ENCODE measurements at regions of chr11 and their contacts with region 1.

Region 1: GRCh38 chr11:62652161-62653006 is 718 bp downstream of the INTS5 start:
- DNase-seq: no peak
- ATAC-seq: no peak
- H3K4me3 Mint-ChIP-seq: peak overlapping the region; percentile 90
- H3K27ac Mint-ChIP-seq: peak overlapping the region; percentile 90
- H3K4me1 Mint-ChIP-seq: peaks cover 28% of the 10 kb centered on the region
- H3K27me3 Mint-ChIP-seq: no peaks in the 10 kb centered on the region
- CTCF ChIP-seq: no peak

Region 2: DNA sequence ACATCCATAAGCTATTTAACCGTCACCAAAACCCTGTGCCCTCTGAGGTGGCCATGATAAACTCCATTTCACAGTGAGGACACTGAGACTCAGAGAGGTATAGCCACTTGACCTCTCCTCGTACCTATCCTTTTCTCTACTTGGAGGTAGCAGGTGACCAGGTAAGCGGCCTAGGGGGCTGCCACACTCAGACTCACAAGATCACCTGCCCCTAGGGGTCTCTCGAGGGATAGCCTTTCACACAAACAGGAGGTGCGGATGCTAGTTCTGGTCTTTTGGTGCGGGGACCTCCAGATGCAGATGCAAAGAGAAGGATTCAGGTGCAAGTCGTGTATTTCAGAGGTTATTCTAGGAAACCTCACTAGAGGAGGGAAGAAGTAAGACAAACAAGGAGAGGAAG is 1913.3 kb before region 1 on chr11:
- CTCF ChIA-PET with region 1: no interaction called
- POLR2A ChIA-PET with region 1: no interaction called
- intact Hi-C with region 1: no loop called
- DNase-seq: no peak
- ATAC-seq: no peak
- H3K4me3 Mint-ChIP-seq: no peak overlapping the region
- H3K27ac Mint-ChIP-seq: no peak overlapping the region
- H3K4me1 Mint-ChIP-seq: no peaks in the 10 kb centered on the region
- H3K27me3 Mint-ChIP-seq: peaks cover 14% of the 10 kb centered on the region
- CTCF ChIP-seq: no peak

Region 3: DNA sequence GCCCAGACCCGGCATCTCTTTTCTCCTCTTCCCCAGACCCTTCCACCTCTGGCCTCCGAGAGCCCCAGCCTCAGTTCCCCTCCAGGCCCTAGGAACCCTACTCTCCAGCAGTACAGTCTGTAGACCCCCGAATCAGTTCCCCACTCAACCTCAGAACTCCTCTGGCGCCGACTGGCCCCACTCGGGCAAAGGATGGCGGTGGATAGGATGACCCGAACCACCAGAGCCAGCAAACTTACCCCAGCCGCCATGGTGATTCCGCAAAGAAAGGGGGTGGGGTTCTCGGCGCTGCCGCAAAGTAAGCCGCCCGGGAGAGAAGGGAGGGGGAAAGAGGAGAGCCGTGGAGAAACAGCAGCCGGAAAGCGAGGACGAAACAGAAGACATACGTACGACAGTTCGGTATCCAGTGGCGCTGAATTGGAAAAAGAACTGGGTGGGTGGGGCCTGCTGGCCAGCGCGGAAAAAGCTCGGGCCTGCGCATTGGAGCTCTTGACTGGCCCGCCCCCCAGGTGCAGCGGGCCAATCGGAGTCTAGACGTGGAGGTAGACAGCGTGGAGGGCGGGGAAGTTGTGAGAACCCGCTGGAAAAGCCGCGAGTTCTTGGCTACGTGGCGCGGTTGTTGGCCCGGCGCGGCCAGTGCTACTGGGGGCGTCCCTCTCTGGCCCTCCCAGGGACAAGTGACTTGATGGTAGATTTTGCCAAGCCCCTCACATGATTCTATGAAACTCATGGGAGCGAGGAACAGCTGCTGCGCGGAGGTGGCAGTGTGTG is 78.6 kb before region 1 on chr11 and contains the start of gene EEF1G:
- CTCF ChIA-PET with region 1: no interaction called
- POLR2A ChIA-PET with region 1: interaction called, 10 read pairs
- intact Hi-C with region 1: no loop called
- DNase-seq: peak; percentile 92
- ATAC-seq: peak; percentile 94
- H3K4me3 Mint-ChIP-seq: peak within 1 kb of the TSS; percentile 97
- H3K27ac Mint-ChIP-seq: peak within 1 kb of the TSS; percentile 94
- H3K4me1 Mint-ChIP-seq: peaks cover 51% of the 10 kb centered on the region
- H3K27me3 Mint-ChIP-seq: no peaks in the 10 kb centered on the region
- CTCF ChIP-seq: no peak
- total RNA-seq, gene EEF1G: 2,373 and 2,524 TPM in 2 replicates

Region 4: GRCh38 chr11:62601394-62602140 is 50.8 kb before region 1 on chr11 and contains the start of gene MTA2:
- CTCF ChIA-PET with region 1: no interaction called
- POLR2A ChIA-PET with region 1: interaction called, 15 read pairs
- intact Hi-C with region 1: no loop called
- DNase-seq: peak; percentile 100
- ATAC-seq: peak; percentile 81
- H3K4me3 Mint-ChIP-seq: peak within 1 kb of the TSS; percentile 92
- H3K27ac Mint-ChIP-seq: peak within 1 kb of the TSS; percentile 97
- H3K4me1 Mint-ChIP-seq: peaks cover 45% of the 10 kb centered on the region
- H3K27me3 Mint-ChIP-seq: no peaks in the 10 kb centered on the region
- CTCF ChIP-seq: no peak
- total RNA-seq, gene MTA2: 170 and 175 TPM in 2 replicates

Region 5: DNA sequence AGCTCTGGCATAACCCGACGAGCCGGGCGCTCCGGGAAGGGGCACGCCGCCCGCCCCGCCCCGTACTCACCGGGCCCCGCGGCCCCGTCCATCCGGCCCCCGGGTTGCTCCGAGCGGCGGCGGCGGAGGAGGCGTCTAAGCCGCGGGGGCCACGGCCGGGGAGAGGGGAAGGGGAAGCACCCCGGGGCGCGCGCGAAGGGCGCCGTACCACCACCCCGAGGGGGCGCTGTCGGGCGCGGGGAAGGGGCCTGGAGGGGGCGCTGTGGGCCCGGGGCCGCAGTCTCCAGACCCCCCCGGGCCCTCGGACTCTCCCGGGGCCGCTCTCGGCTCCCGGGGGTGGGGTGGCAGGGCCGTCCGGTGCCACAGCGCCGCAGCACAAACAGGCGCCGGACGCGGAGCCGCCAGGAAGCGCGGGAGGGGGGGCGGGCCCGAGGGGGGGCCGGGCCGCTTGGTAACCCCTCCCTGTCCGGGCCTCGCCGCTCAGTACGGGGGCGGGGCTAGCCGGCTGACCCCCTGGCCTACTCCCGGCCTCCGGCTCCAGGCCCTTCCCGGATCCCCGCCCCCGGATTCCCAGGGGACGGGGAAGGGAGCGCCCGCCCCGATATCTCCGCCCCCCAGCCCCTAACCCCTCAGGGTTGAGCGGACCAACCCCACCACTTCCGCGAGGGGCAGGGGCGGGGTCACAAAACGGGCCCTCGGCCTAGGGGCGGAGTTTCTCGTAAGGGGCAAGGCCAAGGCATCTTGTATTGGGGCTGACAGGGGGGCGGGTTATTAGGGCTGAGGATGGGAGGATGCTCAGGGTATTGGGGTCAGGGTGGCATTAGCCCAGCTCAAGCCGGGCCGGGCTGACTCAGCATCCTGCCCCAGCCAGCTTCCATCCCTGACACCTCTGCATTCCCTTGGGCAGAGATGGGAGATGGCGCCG is 39.8 kb before region 1 on chr11 and contains the starts of genes EML3 and ROM1:
- CTCF ChIA-PET with region 1: no interaction called
- POLR2A ChIA-PET with region 1: interaction called, 17 read pairs
- intact Hi-C with region 1: loop called (anchors 1 kb)
- DNase-seq: peak; percentile 95
- ATAC-seq: peak; percentile 82
- H3K4me3 Mint-ChIP-seq: peak within 1 kb of the TSS; percentile 93
- H3K27ac Mint-ChIP-seq: peak within 1 kb of the TSS; percentile 95
- H3K4me1 Mint-ChIP-seq: peaks cover 27% of the 10 kb centered on the region
- H3K27me3 Mint-ChIP-seq: no peaks in the 10 kb centered on the region
- CTCF ChIP-seq: peak; percentile 59
- total RNA-seq, gene EML3: 115 and 128 TPM in 2 replicates
- total RNA-seq, gene ROM1: 0.89 and 2.6 TPM in 2 replicates

Region 6: DNA sequence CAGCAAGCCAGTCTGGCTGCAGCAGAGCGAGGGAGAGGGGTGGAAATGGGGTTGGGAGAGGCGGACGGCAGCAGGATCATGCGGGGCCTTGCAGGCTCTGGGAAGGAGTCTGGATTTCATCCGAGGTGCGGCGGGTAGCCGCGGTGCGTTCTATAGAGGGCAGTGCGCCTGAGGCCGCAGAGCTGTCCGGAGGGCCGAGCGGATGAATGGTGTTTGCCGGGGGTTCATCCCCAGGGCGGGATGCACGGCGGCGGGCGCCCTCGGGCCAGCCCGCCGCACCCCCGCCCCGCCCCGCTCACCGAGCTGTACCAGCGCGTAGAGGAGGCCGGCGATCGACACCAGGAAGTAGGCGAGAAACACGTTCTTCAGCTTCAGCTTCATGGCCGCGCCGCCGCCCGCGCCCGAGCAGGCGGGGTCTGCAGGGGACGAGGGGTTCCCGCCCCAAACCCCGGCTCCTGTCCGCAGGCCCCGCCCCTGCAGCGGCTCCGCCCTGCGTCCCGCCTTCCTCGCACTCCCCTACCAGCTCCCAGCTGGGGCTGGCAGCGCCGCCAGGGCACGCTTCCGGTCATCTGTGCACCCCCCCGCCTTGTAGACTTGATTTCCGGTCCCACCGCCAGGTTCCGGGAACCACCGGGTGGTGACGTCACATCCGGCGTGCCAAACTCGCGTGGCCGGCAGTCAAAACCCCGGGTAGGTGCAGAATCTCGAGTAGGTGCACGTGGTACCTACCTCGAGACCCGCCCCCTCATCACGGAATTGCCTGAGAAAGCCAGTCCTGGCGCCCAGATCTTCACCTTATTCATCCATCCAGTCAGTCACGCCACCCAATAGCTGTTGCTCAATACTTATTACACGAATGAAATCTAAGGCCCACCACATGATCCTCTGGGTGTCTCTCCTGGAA is 30.6 kb before region 1 on chr11 and contains the start of gene B3GAT3:
- CTCF ChIA-PET with region 1: no interaction called
- POLR2A ChIA-PET with region 1: interaction called, 42 read pairs
- intact Hi-C with region 1: no loop called
- DNase-seq: peak; percentile 93
- ATAC-seq: peak; percentile 92
- H3K4me3 Mint-ChIP-seq: peak within 1 kb of the TSS; percentile 90
- H3K27ac Mint-ChIP-seq: peak within 1 kb of the TSS; percentile 93
- H3K4me1 Mint-ChIP-seq: peaks cover 19% of the 10 kb centered on the region
- H3K27me3 Mint-ChIP-seq: no peaks in the 10 kb centered on the region
- CTCF ChIP-seq: no peak
- total RNA-seq, gene B3GAT3: 48.8 and 56.6 TPM in 2 replicates

Region 7: GRCh38 chr11:62678770-62679696 is 26.6 kb after region 1 on chr11 and contains the start of gene UBXN1:
- CTCF ChIA-PET with region 1: interaction called, 3 read pairs
- POLR2A ChIA-PET with region 1: interaction called, 400 read pairs
- intact Hi-C with region 1: loop called (anchors 2 kb)
- DNase-seq: peak; percentile 77
- ATAC-seq: peak; percentile 74
- H3K4me3 Mint-ChIP-seq: peak within 1 kb of the TSS; percentile 91
- H3K27ac Mint-ChIP-seq: peak within 1 kb of the TSS; percentile 96
- H3K4me1 Mint-ChIP-seq: peaks cover 41% of the 10 kb centered on the region
- H3K27me3 Mint-ChIP-seq: no peaks in the 10 kb centered on the region
- CTCF ChIP-seq: no peak
- total RNA-seq, gene UBXN1: 204 and 205 TPM in 2 replicates